Naive thymus-derived CD8-positive, alpha-beta T cell (primary cell): ENCODE measurements at regions of chr18 and their contacts with region 1.

Region 1: DNA sequence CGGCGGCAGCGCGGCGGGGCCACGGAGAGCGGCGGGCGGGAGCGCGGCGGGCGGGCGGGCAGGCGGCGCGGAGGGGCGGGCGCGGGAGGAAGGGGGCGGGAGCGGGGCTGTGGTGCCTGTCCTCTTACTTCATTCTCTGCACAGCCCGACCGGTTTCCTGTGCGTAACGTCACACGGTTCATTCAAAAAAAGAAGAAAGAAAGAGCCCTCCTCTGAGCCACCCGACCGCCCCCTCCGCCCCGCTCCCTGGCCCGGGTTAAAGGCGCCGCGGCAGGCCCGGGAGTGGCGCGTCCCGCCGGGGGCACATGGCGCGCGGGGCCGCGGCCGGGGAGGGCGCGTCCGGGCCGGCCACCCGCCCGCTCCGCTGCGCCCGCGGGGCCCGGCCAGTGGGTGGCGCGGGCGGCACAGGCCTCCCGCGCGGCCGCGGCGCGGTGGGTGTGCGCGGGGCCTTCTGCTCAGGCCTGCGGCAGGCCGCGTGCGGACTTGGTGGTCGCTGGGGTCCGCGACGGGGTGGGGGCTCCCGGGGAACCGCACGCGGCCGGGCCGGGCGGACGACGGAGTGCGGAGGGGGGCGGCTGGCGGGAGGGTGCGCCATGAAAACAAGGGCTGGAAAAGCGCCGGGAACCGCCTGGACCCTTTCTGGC is 599 bp upstream of the BCL2 start:
- DNase-seq: peak; percentile 79 to 95 (median 86)
- ATAC-seq: peak; percentile 76 to 83
- H3K4me3 Mint-ChIP-seq: peak overlapping the region; percentile 81 to 99 (median 88)
- H3K27ac Mint-ChIP-seq: peak overlapping the region; percentile 68 to 97 (median 92)
- H3K4me1 Mint-ChIP-seq: peaks cover 20 to 64% (median 42%) of the 10 kb centered on the region in 4 donors
- H3K27me3 Mint-ChIP-seq: no peaks in the 10 kb centered on the region

Region 2: DNA sequence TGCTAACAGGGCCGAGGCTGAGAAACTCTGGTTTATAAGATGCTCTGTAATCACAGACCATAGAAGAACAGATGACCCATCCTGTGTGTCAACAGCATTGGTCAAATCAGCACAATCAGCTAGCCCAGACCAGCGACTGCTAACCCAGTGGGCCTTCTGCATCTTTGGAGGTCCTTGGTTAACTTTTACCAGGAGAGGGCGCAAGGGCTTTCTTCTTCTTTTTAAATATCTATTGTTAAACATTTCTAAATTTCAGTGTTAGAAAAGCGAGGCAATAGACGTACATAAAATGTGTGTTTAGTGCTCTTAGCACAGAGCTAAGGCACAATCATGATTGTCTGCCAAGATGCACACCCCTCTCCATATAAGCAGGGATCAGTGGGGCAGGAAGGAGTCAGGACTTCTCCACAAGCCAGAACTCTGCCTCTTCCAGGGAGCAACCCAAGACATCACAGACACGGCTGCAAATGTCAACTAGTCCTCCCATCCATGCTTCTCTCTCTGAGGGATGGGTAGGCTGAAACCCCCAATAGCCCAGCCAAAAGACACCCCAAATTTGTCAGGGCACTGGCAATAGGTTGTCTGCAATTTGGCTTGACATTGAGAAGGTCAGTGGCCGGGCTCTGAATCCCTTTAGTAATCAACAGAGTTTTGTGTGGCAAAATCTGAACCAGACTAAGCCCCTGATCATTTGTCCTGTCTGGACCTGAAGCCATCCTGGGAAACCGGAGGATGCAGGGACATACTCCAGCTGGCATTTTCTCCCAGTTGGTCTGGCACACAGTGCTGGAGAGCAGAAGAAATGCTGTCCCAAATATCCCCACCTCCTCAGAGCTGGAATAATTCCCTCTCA is 188.8 kb before region 1 on chr18:
- POLR2A ChIA-PET with region 1: interaction called, 21 read pairs
- DNase-seq: peak in 9 of 10 donors; percentile 32 to 82 (median 57)
- ATAC-seq: peak; percentile 69 to 75
- H3K4me3 Mint-ChIP-seq: peak overlapping the region in 6 of 10 donors; percentile 16 to 60 (median 57)
- H3K27ac Mint-ChIP-seq: peak overlapping the region; percentile 55 to 95 (median 81)
- H3K4me1 Mint-ChIP-seq: peaks cover 25 to 39% (median 34%) of the 10 kb centered on the region in 4 donors
- H3K27me3 Mint-ChIP-seq: no peaks in the 10 kb centered on the region

Region 3: GRCh38 chr18:63155169-63155852 is 164.9 kb before region 1 on chr18:
- POLR2A ChIA-PET with region 1: interaction called, 58 read pairs
- DNase-seq: peak; percentile 58 to 90 (median 78)
- ATAC-seq: peak; percentile 74 to 77
- H3K4me3 Mint-ChIP-seq: peak overlapping the region; percentile 75 to 94 (median 86)
- H3K27ac Mint-ChIP-seq: peak overlapping the region; percentile 94 to 100 (median 98)
- H3K4me1 Mint-ChIP-seq: peaks cover 61 to 100% (median 97%) of the 10 kb centered on the region in 4 donors
- H3K27me3 Mint-ChIP-seq: no peaks in the 10 kb centered on the region

Region 4: GRCh38 chr18:63224630-63225029 is 95.5 kb before region 1 on chr18:
- POLR2A ChIA-PET with region 1: interaction called, 12 read pairs
- DNase-seq: peak in 2 of 10 donors; percentile 15 to 42
- ATAC-seq: peak; percentile 83 to 89
- H3K4me3 Mint-ChIP-seq: peak overlapping the region; percentile 3 to 79 (median 60)
- H3K27ac Mint-ChIP-seq: peak overlapping the region; percentile 55 to 98 (median 88)
- H3K4me1 Mint-ChIP-seq: peaks cover 46 to 87% (median 79%) of the 10 kb centered on the region in 4 donors
- H3K27me3 Mint-ChIP-seq: no peaks in the 10 kb centered on the region

Region 5: DNA sequence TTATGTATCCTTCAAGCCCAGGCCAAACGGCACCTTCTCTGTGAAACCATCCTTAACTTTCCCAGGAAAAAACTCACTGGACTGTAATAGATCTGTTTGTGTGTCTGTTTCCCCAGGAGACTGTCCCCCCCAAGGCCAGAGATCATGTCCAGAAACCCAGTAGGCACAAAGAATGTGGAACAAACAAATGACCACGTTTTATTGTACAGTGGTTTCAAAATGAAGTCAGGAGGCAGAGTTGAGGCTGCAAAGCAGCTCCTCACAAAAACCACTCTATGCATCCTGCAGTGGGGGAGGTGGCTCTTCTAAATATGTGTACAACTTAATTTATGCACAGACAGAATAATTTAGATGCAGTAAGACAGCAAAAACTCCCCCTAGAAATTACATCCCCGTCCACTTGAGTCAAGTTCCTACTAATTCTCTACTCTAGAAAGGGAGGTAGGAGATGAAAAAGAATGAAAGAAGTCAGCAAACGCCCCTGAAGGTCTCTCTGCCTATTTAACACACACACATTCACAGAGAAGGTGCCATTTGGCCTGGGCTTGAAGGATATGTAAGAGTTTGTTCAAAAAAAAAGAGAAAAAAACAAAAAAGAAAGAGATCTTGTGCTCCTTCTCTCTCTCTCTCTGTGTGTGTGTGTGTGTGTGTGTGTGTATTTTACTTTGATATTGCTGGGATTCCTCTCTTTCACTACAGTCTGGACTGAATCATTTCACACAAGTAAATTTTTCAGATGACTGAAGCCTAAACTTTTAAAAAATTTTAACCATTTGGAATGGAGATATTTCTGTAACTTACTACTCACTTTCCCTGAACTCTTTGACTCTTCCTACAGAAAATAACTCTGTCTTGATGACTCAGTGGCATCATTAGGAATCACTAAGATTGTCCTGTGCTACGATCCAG is 20.1 kb before region 1 on chr18:
- POLR2A ChIA-PET with region 1: interaction called, 42 read pairs
- DNase-seq: no peak
- ATAC-seq: peak; percentile 57 to 72
- H3K4me3 Mint-ChIP-seq: peak overlapping the region; percentile 43 to 75 (median 64)
- H3K27ac Mint-ChIP-seq: peak overlapping the region; percentile 53 to 96 (median 91)
- H3K4me1 Mint-ChIP-seq: peaks cover 39 to 84% (median 80%) of the 10 kb centered on the region in 4 donors
- H3K27me3 Mint-ChIP-seq: no peaks in the 10 kb centered on the region

Region 6: GRCh38 chr18:63348508-63349136 is 28.5 kb after region 1 on chr18:
- POLR2A ChIA-PET with region 1: no interaction called
- DNase-seq: no peak
- ATAC-seq: no peak
- H3K4me3 Mint-ChIP-seq: no peak overlapping the region
- H3K27ac Mint-ChIP-seq: no peak overlapping the region
- H3K4me1 Mint-ChIP-seq: peaks cover 0 to 4% (median 1%) of the 10 kb centered on the region in 4 donors
- H3K27me3 Mint-ChIP-seq: no peaks in the 10 kb centered on the region

Region 7: DNA sequence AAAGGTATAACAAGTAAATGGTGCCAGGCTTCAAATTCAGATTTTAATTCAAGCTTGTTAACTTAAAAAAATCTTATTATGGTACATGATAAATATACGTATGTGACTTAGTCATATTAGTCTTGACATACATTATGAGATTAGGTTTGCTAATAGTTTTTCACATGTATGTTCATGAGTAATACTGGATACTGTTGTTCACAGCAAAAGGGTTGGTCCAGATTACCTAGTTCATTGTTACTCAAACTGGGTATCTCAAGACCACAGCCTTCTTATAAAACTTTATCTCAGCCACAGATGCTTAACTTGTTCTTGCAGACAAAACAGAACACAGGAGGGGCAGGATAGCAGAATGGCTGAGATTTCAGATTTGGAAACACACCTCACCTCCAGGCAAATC is 75.3 kb after region 1 on chr18:
- POLR2A ChIA-PET with region 1: no interaction called
- DNase-seq: no peak
- ATAC-seq: no peak
- H3K4me3 Mint-ChIP-seq: no peak overlapping the region
- H3K27ac Mint-ChIP-seq: no peak overlapping the region
- H3K4me1 Mint-ChIP-seq: peaks cover 0 to 4% (median 0%) of the 10 kb centered on the region in 4 donors
- H3K27me3 Mint-ChIP-seq: no peaks in the 10 kb centered on the region